ENCODE measurements at regions of chr7 and their contacts with region 1.

Region 1: GRCh38 chr7:106216517-106216922 is 68.3 kb downstream of the NAMPT start:
- DNase-seq: peak; percentile 68 to 71
- ATAC-seq: peak; percentile 96
- H3K4me3 ChIP-seq: peak overlapping the region in 3 of 4 donors; percentile 19 to 40 (median 33)
- H3K27ac ChIP-seq: peak overlapping the region; percentile 73 to 91 (median 80)
- H3K4me1 ChIP-seq: peaks cover 16 to 27% of the 10 kb centered on the region in 2 donors
- H3K27me3 ChIP-seq: no peaks in the 10 kb centered on the region
- CTCF ChIP-seq: no peak
- POLR2A ChIP-seq: no peak

Region 2: GRCh38 chr7:106425017-106425719 is 208.6 kb after region 1 on chr7:
- in situ Hi-C with region 1: no loop called
- intact Hi-C with region 1: loop called (anchors 2 kb)
- DNase-seq: peak; percentile 72 to 80
- ATAC-seq: peak; percentile 93 to 96
- H3K4me3 ChIP-seq: peak overlapping the region in 1 of 4 donors; percentile 1
- H3K27ac ChIP-seq: peak overlapping the region; percentile 65 to 83 (median 77)
- H3K4me1 ChIP-seq: peaks cover 31 to 32% of the 10 kb centered on the region in 2 donors
- H3K27me3 ChIP-seq: no peaks in the 10 kb centered on the region
- CTCF ChIP-seq: no peak
- POLR2A ChIP-seq: no peak

Measured in gastrocnemius medialis (tissue), 4 donors.